ENCODE measurements at regions of chr6 and their contacts with region 1.

Region 1: GRCh38 chr6:159789377-159790148 is at the start of gene TCP1:
- DNase-seq: peak; percentile 90
- ATAC-seq: peak; percentile 78
- H3K4me3 Mint-ChIP-seq: peak within 1 kb of the TSS; percentile 95
- H3K27ac Mint-ChIP-seq: peak within 1 kb of the TSS; percentile 95
- H3K4me1 Mint-ChIP-seq: peaks cover 49% of the 10 kb centered on the region
- H3K27me3 Mint-ChIP-seq: no peaks in the 10 kb centered on the region
- CTCF ChIP-seq: no peak
- total RNA-seq, gene TCP1: 181 and 199 TPM in 2 replicates

Region 2: GRCh38 chr6:157941101-157941863 is 1848.3 kb before region 1 on chr6:
- CTCF ChIA-PET with region 1: no interaction called
- POLR2A ChIA-PET with region 1: no interaction called
- intact Hi-C with region 1: no loop called
- DNase-seq: no peak
- ATAC-seq: no peak
- H3K4me3 Mint-ChIP-seq: no peak overlapping the region
- H3K27ac Mint-ChIP-seq: no peak overlapping the region
- H3K4me1 Mint-ChIP-seq: peaks cover under 1% of the 10 kb centered on the region
- H3K27me3 Mint-ChIP-seq: no peaks in the 10 kb centered on the region
- CTCF ChIP-seq: no peak

Region 3: DNA sequence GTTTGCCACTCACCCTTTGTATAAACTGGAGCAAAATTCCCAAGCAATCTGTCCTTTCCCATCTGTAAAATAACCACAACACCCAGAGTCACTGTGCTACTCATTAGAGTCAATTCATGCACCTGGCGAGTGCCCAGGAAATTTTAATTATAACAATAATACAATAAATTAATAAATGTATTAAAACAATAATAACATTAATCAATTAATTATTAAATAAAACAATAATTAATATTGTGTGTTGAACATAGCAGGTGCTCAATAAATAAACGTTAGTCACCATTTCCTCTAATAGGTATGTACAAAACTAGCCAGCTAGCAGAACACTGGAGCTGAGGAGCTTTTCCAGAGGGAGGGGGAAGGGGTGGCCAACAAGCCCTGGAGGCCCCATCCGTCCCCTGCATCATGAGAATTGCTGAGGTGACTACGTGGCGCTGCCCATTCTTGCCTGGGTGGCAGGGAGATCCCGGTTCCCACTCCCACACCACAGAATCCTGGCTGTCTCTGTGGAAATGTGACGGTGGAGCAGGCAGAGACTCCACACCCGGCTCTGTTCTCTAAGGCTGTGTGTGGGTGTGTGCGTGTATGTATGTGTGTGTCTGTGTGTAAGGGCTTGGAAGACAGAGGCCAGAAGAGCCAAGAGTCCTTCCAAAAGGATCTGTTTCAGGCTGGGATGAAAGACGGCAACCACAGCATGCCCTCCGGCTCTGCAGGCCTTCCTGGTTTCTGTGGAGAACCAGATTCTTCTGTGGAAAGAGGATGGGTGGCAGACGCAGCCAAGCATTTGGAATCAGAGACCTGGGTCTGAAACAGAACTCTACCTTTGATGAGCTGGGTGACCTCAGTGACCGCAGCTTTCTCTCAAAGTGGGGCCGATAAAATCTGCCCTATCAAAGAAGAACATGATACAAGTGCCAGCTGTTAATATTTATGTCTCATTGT is 951.6 kb before region 1 on chr6:
- CTCF ChIA-PET with region 1: no interaction called
- POLR2A ChIA-PET with region 1: no interaction called
- intact Hi-C with region 1: no loop called
- DNase-seq: no peak
- ATAC-seq: no peak
- H3K4me3 Mint-ChIP-seq: no peak overlapping the region
- H3K27ac Mint-ChIP-seq: no peak overlapping the region
- H3K4me1 Mint-ChIP-seq: peaks cover 30% of the 10 kb centered on the region
- H3K27me3 Mint-ChIP-seq: no peaks in the 10 kb centered on the region
- CTCF ChIP-seq: no peak

Region 4: DNA sequence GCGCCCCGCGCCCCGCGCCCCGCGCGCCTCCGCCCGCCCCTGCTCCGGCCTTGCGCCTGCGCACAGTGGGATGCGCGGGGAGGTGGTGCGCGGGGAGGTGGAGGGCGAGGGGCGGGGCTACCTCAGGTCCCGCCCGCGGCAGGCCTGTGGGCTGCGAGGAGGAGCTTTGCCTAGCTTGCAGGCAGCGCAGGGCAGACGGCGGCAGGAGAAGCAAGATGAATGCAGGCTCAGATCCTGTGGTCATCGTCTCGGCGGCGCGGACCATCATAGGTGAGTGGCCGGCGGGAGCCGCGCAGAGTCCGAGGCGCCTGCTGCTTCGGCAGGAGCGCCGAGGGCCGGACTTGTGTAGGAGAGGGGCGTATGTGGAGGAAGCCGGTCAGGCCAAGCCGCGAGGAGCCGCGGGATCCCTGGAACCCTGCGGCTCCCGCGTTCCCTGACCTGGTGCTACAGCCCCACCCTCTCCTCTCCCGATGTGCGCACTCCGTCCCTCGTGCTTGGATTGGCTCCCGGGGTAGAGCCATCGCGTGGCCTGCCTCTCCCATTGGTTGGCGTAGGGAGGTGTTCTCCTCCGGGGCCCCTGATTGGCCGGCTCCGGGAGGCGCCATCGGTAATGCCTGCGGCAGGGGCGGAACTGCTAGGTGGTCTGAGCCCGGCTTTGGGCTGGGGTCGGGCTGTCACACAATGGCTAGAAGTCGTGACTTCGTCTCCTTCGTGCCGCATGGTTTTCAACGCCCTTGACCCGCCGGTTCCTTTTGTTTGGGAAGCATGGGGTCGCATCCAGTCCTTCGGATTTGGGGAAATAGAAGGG is 27.5 kb before region 1 on chr6 and contains the start of gene ACAT2:
- CTCF ChIA-PET with region 1: interaction called, 3 read pairs
- POLR2A ChIA-PET with region 1: interaction called, 78 read pairs
- intact Hi-C with region 1: loop called (anchors 1 kb)
- DNase-seq: peak; percentile 85
- ATAC-seq: peak; percentile 95
- H3K4me3 Mint-ChIP-seq: peak within 1 kb of the TSS; percentile 96
- H3K27ac Mint-ChIP-seq: peak within 1 kb of the TSS; percentile 94
- H3K4me1 Mint-ChIP-seq: peaks cover 18% of the 10 kb centered on the region
- H3K27me3 Mint-ChIP-seq: no peaks in the 10 kb centered on the region
- CTCF ChIP-seq: no peak
- total RNA-seq, gene ACAT2: 82.0 and 87.9 TPM in 2 replicates

Region 5: DNA sequence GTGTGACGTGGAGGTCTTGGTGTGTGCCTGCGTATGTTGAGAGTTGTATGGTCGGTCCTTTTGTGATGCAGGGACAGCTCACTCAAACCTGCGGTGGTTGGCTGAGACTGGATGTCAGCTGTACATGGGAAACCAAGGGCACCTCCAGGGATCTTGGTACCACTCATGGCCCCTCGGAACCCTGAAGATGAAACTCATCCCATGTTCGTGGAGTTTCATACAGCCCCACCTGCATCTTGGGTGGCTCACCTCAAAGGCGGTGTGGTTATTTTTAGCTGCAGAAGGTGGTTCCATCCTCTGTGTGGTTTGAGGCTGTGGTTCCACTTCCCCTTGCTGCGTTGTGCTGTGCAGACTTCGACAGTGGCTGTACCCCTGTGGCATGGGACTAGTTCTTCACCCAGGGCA is 279.5 kb after region 1 on chr6:
- CTCF ChIA-PET with region 1: no interaction called
- POLR2A ChIA-PET with region 1: interaction called, 13 read pairs
- intact Hi-C with region 1: loop called (anchors 1 kb)
- DNase-seq: peak; percentile 38
- ATAC-seq: peak; percentile 89
- H3K4me3 Mint-ChIP-seq: peak overlapping the region; percentile 42
- H3K27ac Mint-ChIP-seq: peak overlapping the region; percentile 5
- H3K4me1 Mint-ChIP-seq: peaks cover 40% of the 10 kb centered on the region
- H3K27me3 Mint-ChIP-seq: no peaks in the 10 kb centered on the region
- CTCF ChIP-seq: no peak

Measured in activated B cell treated with CpG ODN at 0.5 μM for 24 hours (primary cell).